Ascending aorta (tissue), 2 donors: ENCODE measurements at regions of chr14 and their contacts with region 1.

Region 1: GRCh38 chr14:53295985-53296582 is 143.0 kb upstream of the DDHD1 start:
- DNase-seq: no peak
- H3K4me3 ChIP-seq: no peak overlapping the region
- H3K27ac ChIP-seq: no peak overlapping the region
- H3K4me1 ChIP-seq: no peaks in the 10 kb centered on the region
- H3K27me3 ChIP-seq: no peaks in the 10 kb centered on the region
- CTCF ChIP-seq: peak; percentile 31 to 62 (median 51)

Region 2: GRCh38 chr14:53226553-53226952 is 69.5 kb before region 1 on chr14:
- intact Hi-C with region 1: no loop called
- DNase-seq: no peak
- H3K4me3 ChIP-seq: no peak overlapping the region
- H3K27ac ChIP-seq: no peak overlapping the region
- H3K4me1 ChIP-seq: no peaks in the 10 kb centered on the region
- H3K27me3 ChIP-seq: no peaks in the 10 kb centered on the region
- CTCF ChIP-seq: no peak

Region 3: DNA sequence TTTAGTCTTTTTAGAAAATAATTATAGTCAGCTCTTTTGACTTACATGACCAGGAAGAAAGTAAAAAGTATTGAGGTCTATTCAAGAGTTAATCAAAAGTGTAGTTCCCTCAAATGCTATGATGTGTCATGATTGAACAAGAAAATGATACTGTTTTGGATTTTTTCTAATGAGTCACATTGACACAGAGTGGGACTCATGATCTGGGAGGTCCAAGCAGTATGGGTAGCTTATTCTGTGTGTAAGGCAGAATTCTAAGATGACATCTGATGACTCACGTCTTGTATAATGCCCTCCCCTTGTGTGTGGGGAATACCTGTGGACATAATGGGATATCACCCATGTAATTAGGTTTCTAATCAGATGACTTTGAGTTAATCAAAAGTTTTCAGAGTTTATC is 35.2 kb after region 1 on chr14:
- intact Hi-C with region 1: no loop called
- DNase-seq: no peak
- H3K4me3 ChIP-seq: no peak overlapping the region
- H3K27ac ChIP-seq: no peak overlapping the region
- H3K4me1 ChIP-seq: no peaks in the 10 kb centered on the region
- H3K27me3 ChIP-seq: no peaks in the 10 kb centered on the region
- CTCF ChIP-seq: no peak

Region 4: DNA sequence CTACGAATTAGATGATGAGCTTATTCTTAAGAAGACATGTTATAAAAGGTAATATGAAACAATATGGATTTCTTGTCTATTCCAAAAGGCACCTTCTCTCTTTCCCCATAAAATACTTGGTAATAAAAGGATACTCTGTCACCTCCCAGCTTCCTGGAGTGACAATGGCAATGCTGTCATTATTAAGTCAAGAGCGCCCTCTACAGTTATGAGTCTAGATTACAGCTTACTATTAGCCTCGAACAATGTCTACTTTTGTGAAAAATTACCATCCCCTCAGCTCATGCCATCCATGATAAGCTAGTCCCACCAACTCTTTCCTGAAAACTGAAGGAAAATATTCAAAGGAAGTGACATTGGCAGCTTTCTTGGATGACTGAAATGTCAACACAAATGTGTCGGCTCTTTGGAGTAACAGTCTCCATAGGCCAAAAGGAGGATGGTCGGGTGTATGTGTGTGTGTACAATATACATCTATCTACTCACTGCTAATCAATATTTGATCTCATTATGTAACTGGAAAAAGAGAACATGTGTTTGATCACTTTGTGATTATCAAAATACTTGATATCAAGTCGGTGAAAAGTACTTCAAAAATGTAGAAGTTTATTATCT is 1052.0 kb after region 1 on chr14:
- intact Hi-C with region 1: loop called (anchors 2 kb)
- DNase-seq: no peak
- H3K4me3 ChIP-seq: no peak overlapping the region
- H3K27ac ChIP-seq: no peak overlapping the region
- H3K4me1 ChIP-seq: no peaks in the 10 kb centered on the region
- H3K27me3 ChIP-seq: no peaks in the 10 kb centered on the region
- CTCF ChIP-seq: peak; percentile 44 to 75 (median 66)